Ascending aorta (tissue), 2 donors: ENCODE measurements at regions of chr6 and their contacts with region 1.

Region 1: DNA sequence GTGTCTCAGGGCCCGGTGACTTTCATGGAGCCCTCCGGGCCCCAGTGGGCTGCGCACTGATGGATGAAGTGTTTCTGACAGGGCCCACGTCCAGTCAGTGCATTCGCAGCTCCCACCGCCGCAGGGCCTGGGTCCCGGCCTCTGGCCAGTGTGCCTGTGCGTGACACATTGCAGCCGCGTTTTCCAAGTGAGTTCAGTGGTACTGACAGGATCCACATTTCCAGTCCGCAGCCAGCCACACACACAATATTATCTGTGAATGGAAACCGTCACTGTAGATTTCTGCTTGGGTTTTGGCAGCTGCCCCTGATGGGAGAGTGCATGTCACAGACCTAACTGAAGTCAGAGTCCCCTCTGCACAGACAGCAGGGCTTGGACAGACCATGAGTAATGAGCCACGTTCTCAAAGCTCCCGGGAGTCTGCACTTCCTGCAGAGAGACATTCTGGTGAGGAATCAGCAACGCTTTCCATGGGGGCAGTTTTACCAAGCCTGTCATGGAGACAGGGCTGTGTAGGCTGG is 171.4 kb downstream of the MYLK4 start:
- DNase-seq: no peak
- H3K4me3 ChIP-seq: no peak overlapping the region
- H3K27ac ChIP-seq: peak overlapping the region in 1 of 2 donors; percentile 55
- H3K4me1 ChIP-seq: peaks cover 0 to 2% of the 10 kb centered on the region in 2 donors
- H3K27me3 ChIP-seq: no peaks in the 10 kb centered on the region
- CTCF ChIP-seq: no peak

Region 2: GRCh38 chr6:2503816-2504494 is 75.3 kb before region 1 on chr6:
- intact Hi-C with region 1: loop called (anchors 5 kb)
- DNase-seq: no peak
- H3K4me3 ChIP-seq: no peak overlapping the region
- H3K27ac ChIP-seq: no peak overlapping the region
- H3K4me1 ChIP-seq: peaks cover 0 to 6% of the 10 kb centered on the region in 2 donors
- H3K27me3 ChIP-seq: no peaks in the 10 kb centered on the region
- CTCF ChIP-seq: no peak